ENCODE measurements at regions of chr12 and their contacts with region 1.

Region 1: GRCh38 chr12:51188359-51189051 is 15.6 kb upstream of the TFCP2 start:
- DNase-seq: no peak
- ATAC-seq: peak; percentile 60
- H3K4me3 Mint-ChIP-seq: peak overlapping the region; percentile 73
- H3K27ac Mint-ChIP-seq: no peak overlapping the region
- H3K4me1 Mint-ChIP-seq: peaks cover 29% of the 10 kb centered on the region
- H3K27me3 Mint-ChIP-seq: no peaks in the 10 kb centered on the region
- CTCF ChIP-seq: no peak

Region 2: DNA sequence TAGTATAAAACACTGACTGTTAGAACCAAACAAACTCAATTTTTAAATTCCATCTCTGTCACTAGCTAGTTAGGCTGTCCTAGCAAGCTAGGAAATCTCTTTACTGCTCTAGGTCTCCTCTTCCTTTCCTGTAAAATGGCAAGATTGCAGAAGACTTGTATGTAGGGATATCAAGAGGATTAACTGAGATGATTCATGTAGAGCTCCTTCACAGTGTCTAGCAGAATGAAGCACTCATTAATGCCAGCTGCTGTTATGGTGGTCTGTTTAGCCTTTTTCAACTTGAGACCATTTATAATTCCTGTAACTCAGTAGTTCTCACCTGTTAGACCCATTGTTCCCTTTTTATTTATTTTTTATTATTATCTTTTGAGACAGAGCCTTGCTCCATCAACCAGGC is 1717.5 kb before region 1 on chr12:
- CTCF ChIA-PET with region 1: no interaction called
- POLR2A ChIA-PET with region 1: no interaction called
- intact Hi-C with region 1: no loop called
- DNase-seq: no peak
- ATAC-seq: no peak
- H3K4me3 Mint-ChIP-seq: no peak overlapping the region
- H3K27ac Mint-ChIP-seq: no peak overlapping the region
- H3K4me1 Mint-ChIP-seq: no peaks in the 10 kb centered on the region
- H3K27me3 Mint-ChIP-seq: no peaks in the 10 kb centered on the region
- CTCF ChIP-seq: no peak

Region 3: GRCh38 chr12:51172515-51173431 is 15.7 kb before region 1 on chr12 and contains the start of gene TFCP2:
- CTCF ChIA-PET with region 1: no interaction called
- POLR2A ChIA-PET with region 1: interaction called, 4 read pairs
- intact Hi-C with region 1: loop called (anchors 1 kb)
- DNase-seq: peak; percentile 84
- ATAC-seq: peak; percentile 98
- H3K4me3 Mint-ChIP-seq: peak within 1 kb of the TSS; percentile 77
- H3K27ac Mint-ChIP-seq: peak within 1 kb of the TSS; percentile 68
- H3K4me1 Mint-ChIP-seq: peaks cover 9% of the 10 kb centered on the region
- H3K27me3 Mint-ChIP-seq: no peaks in the 10 kb centered on the region
- CTCF ChIP-seq: no peak
- total RNA-seq, gene TFCP2: 34.9 and 36.7 TPM in 2 replicates

Region 4: GRCh38 chr12:51391283-51392162 is 203.0 kb after region 1 on chr12 and contains the start of gene GALNT6:
- CTCF ChIA-PET with region 1: no interaction called
- POLR2A ChIA-PET with region 1: no interaction called
- intact Hi-C with region 1: no loop called
- DNase-seq: peak; percentile 80
- ATAC-seq: peak; percentile 75
- H3K4me3 Mint-ChIP-seq: peak within 1 kb of the TSS; percentile 94
- H3K27ac Mint-ChIP-seq: peak within 1 kb of the TSS; percentile 85
- H3K4me1 Mint-ChIP-seq: peaks cover 79% of the 10 kb centered on the region
- H3K27me3 Mint-ChIP-seq: no peaks in the 10 kb centered on the region
- CTCF ChIP-seq: no peak
- total RNA-seq, gene GALNT6: 23.8 and 24.4 TPM in 2 replicates

Region 5: DNA sequence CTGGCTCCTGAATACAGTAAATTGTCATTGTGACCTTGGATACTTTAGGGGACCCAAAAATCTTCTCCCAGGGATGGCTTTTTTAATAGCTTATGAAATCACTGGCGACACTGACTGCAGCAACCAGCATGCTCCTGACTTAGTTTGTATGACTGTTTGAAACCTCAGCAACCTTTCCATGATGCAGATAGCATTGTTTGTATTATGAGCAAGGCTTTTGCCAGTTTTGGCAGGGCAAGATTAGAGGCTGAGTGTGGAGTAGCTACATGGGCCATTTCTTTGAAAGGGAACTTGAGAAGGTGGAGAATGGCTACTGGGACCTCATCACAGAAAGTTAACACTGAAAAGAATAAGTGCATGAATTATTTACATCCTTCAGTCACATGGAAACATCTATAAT is 287.0 kb after region 1 on chr12:
- CTCF ChIA-PET with region 1: no interaction called
- POLR2A ChIA-PET with region 1: no interaction called
- intact Hi-C with region 1: no loop called
- DNase-seq: no peak
- ATAC-seq: no peak
- H3K4me3 Mint-ChIP-seq: no peak overlapping the region
- H3K27ac Mint-ChIP-seq: no peak overlapping the region
- H3K4me1 Mint-ChIP-seq: peaks cover 8% of the 10 kb centered on the region
- H3K27me3 Mint-ChIP-seq: no peaks in the 10 kb centered on the region
- CTCF ChIP-seq: no peak

Region 6: GRCh38 chr12:51505360-51506105 is 317.0 kb after region 1 on chr12:
- CTCF ChIA-PET with region 1: no interaction called
- POLR2A ChIA-PET with region 1: interaction called, 10 read pairs
- intact Hi-C with region 1: no loop called
- DNase-seq: no peak
- ATAC-seq: no peak
- H3K4me3 Mint-ChIP-seq: no peak overlapping the region
- H3K27ac Mint-ChIP-seq: no peak overlapping the region
- H3K4me1 Mint-ChIP-seq: peaks cover 12% of the 10 kb centered on the region
- H3K27me3 Mint-ChIP-seq: no peaks in the 10 kb centered on the region
- CTCF ChIP-seq: no peak